ENCODE measurements at regions of chr6 and their contacts with region 1.

Region 1: DNA sequence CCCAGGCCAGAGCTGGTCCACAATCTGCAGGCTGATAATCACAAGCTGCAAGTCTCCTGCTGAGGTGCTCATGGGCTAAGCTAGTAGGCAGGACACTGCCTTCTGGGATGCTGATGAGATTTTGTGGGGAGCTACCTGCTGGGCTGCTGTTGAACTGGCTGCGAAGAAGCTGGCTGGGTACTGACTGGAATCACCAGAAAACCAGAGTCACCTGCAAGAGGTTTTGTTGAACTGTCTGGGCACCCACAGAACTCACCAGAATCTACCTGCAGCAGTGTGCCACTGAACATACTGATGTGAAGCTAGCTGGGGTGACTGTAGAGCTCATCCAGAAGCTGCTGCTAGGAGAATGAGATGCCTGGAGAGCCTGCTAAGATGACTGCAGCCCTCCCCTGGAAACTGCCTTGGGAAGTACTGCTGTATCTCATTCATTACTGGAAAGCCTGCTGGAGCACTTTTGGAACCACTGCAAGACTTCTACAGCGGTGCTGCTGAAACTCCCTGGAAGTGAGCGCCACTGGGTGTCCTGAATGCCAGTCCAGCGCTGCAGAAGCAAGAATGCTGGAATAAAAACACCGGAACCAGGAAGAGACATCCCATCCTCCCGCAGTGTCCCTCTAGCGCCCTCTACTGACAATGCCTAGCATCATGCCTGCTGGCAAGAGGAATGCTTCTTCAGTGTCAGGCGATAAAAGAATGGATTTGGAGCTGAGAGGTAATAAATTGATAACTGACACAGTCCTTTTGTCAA is 64.9 kb upstream of the ARHGAP18 start:
- DNase-seq: peak; percentile 34
- CTCF ChIP-seq: peak; percentile 64

Region 2: DNA sequence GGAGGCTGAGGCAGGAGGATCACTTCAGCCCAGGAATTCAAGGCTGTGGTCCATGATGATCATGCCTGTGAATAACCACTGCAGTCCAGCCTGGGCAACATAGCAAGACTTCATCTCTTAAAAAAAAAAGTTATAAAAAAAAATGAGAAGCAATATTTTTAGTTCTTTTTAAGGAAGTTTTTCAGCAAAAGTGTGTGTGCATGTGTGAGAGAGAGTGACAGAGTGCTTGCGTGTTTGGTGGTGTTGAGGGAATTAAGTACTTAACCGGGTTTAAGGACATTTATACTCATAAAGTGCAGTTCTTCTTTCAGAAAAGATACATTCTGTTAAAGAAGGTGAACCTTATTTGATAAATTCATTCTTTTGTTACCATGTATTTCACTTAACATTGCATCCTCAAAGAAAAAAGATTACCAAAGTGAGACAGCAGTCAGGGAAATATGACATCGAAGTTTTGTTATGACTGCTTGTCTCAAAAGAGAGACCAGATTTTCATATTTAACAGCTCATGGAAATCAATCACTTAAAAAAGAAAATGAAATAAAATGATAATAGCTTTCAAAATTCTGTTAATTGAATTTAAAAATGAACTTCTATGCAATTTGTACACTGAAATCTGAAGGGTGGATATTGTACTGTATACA is 319.6 kb before region 1 on chr6:
- CTCF ChIA-PET with region 1: no interaction called
- POLR2A ChIA-PET with region 1: no interaction called
- DNase-seq: no peak
- CTCF ChIP-seq: no peak

Region 3: DNA sequence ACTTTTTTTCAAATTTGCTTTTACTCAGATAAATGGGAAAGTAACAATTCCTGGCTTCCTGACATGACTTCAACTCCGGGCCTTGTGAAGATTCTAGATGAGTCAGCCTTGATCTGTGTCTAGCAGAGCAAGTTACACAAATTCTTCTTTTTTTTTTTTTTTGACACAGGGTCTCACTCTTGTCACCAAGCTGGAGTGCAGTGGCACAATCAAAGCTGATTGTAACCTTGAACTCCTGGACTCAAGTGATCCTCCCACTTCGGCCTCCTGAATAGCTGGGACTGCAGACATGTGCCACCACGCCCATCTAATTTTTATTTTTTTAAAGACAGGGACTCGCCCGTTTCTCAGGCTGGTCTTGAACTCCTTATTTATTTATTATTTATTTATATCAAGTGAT is 57.6 kb before region 1 on chr6:
- CTCF ChIA-PET with region 1: no interaction called
- POLR2A ChIA-PET with region 1: no interaction called
- DNase-seq: no peak
- CTCF ChIP-seq: no peak

Region 4: GRCh38 chr6:129748212-129748900 is 26.5 kb before region 1 on chr6:
- CTCF ChIA-PET with region 1: interaction called, 16 read pairs
- POLR2A ChIA-PET with region 1: no interaction called
- DNase-seq: peak; percentile 59
- CTCF ChIP-seq: no peak

Region 5: GRCh38 chr6:129759796-129760605 is 14.9 kb before region 1 on chr6:
- CTCF ChIA-PET with region 1: interaction called, 57 read pairs
- POLR2A ChIA-PET with region 1: no interaction called
- DNase-seq: no peak
- CTCF ChIP-seq: no peak

Region 6: DNA sequence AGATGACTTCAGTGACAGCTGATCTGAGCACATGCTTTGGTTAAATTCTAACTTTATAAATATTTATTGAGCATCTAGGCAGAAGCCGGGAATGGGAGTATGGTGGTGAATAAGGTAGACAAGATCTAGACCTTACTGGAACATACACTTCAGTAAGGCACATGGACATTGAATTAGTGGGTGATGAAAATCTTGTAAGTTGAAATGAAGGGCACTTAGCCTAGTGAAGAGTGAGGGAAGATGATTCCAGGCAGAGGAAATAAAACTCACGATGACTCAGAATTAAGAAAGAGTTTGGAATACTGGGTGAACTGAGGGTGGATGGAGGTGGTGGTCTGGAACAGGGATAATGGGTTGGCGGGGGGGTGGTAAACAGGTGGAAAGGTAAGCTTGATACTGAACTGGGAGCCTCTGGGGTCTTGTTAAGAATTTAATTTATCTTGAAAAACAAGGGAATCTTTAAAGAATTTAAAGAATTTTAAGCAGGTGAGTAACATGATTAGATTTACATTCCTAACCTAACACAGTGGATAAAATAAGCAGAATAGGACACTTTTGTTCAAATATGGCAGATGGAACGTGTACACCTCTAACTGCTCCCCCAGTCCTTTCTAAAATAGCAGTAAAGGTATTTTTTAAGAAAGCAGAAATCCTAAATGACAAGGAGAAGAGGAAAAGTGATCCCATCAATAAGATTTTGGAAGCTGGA is 10.3 kb after region 1 on chr6:
- CTCF ChIA-PET with region 1: interaction called, 21 read pairs
- POLR2A ChIA-PET with region 1: no interaction called
- DNase-seq: no peak
- CTCF ChIP-seq: no peak

Region 7: DNA sequence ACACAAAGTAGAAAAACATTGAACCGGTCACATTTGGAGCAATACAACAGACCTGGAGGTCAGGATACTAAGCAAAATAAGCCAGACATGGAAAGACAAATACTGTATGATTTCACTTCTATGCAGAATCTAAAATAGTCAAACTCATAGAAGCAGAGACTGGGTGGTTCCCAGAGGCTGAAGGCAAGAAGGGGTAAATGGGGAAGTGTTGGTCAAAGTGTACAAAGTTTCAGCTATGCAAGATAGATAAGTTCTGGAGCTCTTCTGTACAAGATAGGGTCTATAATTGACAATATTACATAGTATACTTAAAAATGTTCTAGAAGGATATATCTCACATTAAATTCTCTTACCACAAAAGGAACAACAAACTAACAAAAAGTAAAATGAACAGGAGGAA is 15.9 kb after region 1 on chr6:
- CTCF ChIA-PET with region 1: interaction called, 21 read pairs
- POLR2A ChIA-PET with region 1: no interaction called
- DNase-seq: no peak
- CTCF ChIP-seq: no peak

Region 8: GRCh38 chr6:131231103-131231502 is 1456.2 kb after region 1 on chr6:
- CTCF ChIA-PET with region 1: no interaction called
- POLR2A ChIA-PET with region 1: no interaction called
- DNase-seq: no peak
- CTCF ChIP-seq: no peak

Measured in GM10248 (cell line).